ENCODE measurements at regions of chr6 and their contacts with region 1.

Region 1: DNA sequence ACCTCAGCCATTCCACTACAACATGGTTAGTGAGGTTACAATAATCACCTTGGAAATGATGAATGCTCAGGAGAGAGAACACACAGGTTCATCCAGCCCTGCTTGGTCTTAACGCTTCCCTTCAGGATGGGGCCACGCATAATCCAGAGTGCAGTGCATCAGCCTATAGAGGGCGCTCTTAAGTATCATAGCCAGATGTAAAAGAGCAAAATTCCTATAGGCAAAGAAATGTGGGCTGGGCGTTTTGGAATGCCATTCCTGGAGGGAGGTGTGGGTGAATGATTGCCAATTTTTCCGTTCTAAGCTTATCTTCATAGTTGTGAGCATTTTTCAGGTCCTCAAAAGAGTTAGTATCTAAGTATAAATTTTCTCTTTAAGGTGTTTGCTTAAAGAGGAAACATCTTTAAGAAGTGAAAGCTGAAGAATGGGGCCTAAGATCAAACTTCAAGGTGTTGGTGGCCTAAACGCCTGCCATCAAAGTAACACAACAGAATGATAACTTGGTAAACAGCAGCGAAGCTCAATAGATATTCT is 1.8 kb downstream of the RIPOR2 start:
- DNase-seq: peak; percentile 61
- ATAC-seq: no peak
- H3K4me3 Mint-ChIP-seq: peak overlapping the region; percentile 92
- H3K27ac Mint-ChIP-seq: peak overlapping the region; percentile 95
- H3K4me1 Mint-ChIP-seq: peaks cover 73% of the 10 kb centered on the region
- H3K27me3 Mint-ChIP-seq: no peaks in the 10 kb centered on the region
- CTCF ChIP-seq: peak; percentile 97

Region 2: DNA sequence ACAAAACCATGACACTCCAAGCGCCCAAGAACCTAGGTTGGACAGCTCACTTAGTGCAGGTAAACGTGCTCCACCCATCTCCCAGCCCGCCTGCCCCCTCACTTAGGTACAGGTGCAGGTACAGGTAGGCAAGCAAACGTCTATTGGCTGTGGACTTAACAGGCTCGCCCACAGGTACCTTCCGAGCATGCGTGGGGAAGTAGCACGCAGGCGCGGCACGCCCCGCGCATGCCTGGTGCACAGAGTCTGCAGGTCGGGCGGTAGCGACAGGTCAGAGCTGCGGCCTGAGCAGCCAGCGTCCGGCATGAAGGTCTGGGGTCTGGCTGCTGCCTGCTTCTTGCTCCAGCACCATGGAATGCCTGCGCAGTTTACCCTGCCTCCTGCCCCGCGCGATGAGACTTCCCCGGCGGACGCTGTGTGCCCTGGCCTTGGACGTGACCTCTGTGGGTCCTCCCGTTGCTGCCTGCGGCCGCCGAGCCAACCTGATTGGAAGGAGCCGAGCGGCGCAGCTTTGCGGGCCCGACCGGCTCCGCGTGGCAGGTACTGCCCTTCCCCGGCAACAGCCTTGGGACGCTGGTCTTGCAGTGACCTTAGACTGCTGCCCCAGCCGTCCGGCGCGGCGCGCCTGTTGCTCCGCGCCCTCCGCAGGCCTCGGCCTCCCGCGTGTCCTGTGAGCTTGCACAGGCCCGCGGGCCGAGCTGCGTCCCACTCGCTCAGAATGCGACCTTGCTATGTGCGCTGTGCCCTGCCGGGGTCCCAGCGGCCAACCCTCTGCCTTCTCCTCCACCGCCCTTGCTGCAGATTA is 531.0 kb before region 1 on chr6 and contains the start of gene MRS2:
- CTCF ChIA-PET with region 1: no interaction called
- POLR2A ChIA-PET with region 1: no interaction called
- intact Hi-C with region 1: no loop called
- DNase-seq: peak; percentile 81
- ATAC-seq: peak; percentile 93
- H3K4me3 Mint-ChIP-seq: peak within 1 kb of the TSS; percentile 97
- H3K27ac Mint-ChIP-seq: peak within 1 kb of the TSS; percentile 71
- H3K4me1 Mint-ChIP-seq: peaks cover 25% of the 10 kb centered on the region
- H3K27me3 Mint-ChIP-seq: peaks cover 15% of the 10 kb centered on the region
- CTCF ChIP-seq: no peak
- total RNA-seq, gene MRS2: 24.7 to 26.3 TPM

Region 3: DNA sequence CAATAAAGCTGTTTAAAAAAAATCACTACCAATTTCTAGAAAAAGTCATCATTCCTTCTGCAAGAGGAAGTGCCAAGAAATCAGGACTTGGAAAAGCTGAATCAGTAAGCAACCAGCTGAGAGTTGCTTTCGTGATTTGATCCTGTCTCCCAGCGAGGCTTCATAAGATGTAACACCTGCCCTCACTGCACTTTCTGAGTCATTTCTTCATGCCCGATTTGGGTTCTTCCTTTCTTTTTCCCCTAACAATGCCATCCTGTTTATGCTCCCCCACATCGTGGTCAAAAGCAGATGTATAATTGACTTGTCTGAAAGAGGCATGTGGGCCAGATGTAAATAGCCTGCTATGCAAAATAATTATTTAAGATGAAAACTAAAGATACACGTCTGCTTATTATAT is 50.3 kb before region 1 on chr6:
- CTCF ChIA-PET with region 1: interaction called, 53 read pairs
- POLR2A ChIA-PET with region 1: interaction called, 6 read pairs
- intact Hi-C with region 1: no loop called
- DNase-seq: peak; percentile 69
- ATAC-seq: peak; percentile 79
- H3K4me3 Mint-ChIP-seq: peak overlapping the region; percentile 49
- H3K27ac Mint-ChIP-seq: peak overlapping the region; percentile 97
- H3K4me1 Mint-ChIP-seq: peaks cover 84% of the 10 kb centered on the region
- H3K27me3 Mint-ChIP-seq: no peaks in the 10 kb centered on the region
- CTCF ChIP-seq: no peak

Region 4: DNA sequence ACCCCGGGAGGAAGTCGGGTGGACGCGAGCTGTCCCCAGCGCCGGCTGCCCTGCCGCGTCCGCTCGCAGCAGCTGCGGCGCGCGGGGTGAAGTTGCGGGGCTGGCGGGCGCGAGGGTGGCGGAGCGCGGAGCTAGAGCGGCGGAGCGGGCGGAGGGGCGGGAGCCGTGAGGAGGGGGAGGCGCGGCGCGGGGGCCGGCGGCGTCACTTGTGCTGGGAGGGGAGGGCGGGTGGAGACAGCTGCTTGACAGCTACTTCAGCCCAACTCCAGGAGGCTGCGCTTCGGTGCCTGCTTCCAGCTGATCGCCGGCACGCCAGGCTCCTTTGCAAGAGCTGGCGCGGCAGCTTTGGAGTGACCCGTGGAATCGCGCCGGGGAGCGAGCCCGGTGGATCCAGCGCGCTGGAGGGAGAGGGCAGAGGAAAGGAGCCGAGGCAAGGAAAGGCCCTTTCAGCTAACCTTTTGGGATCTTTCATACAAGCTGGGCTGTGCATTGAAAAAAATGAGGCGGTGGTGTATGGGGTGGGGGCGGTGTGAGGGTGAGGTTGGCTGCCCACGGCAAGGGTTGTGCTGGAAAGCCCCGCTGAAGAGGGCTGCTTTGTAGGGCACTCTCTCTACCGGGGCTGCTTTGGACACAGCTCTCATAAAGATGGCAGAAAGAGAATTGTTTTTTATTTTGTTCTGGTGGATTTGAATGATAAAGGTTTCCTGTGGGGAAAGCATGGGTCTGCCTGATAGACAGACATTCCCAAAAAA is 22.8 kb before region 1 on chr6:
- CTCF ChIA-PET with region 1: interaction called, 237 read pairs
- POLR2A ChIA-PET with region 1: interaction called, 191 read pairs
- intact Hi-C with region 1: no loop called
- DNase-seq: peak; percentile 64
- ATAC-seq: peak; percentile 18
- H3K4me3 Mint-ChIP-seq: peak overlapping the region; percentile 97
- H3K27ac Mint-ChIP-seq: peak overlapping the region; percentile 96
- H3K4me1 Mint-ChIP-seq: peaks cover 73% of the 10 kb centered on the region
- H3K27me3 Mint-ChIP-seq: no peaks in the 10 kb centered on the region
- CTCF ChIP-seq: no peak

Region 5: GRCh38 chr6:24968786-24969185 is 34.9 kb after region 1 on chr6:
- CTCF ChIA-PET with region 1: interaction called, 15 read pairs
- POLR2A ChIA-PET with region 1: interaction called, 12 read pairs
- intact Hi-C with region 1: loop called (anchors 5 kb)
- DNase-seq: peak; percentile 37
- ATAC-seq: peak; percentile 73
- H3K4me3 Mint-ChIP-seq: no peak overlapping the region
- H3K27ac Mint-ChIP-seq: no peak overlapping the region
- H3K4me1 Mint-ChIP-seq: peaks cover 49% of the 10 kb centered on the region
- H3K27me3 Mint-ChIP-seq: no peaks in the 10 kb centered on the region
- CTCF ChIP-seq: no peak

Region 6: GRCh38 chr6:25006565-25007001 is 72.6 kb after region 1 on chr6:
- CTCF ChIA-PET with region 1: interaction called, 68 read pairs
- POLR2A ChIA-PET with region 1: interaction called, 7 read pairs
- intact Hi-C with region 1: no loop called
- DNase-seq: peak; percentile 75
- ATAC-seq: peak; percentile 72
- H3K4me3 Mint-ChIP-seq: peak overlapping the region; percentile 52
- H3K27ac Mint-ChIP-seq: peak overlapping the region; percentile 94
- H3K4me1 Mint-ChIP-seq: peaks cover 82% of the 10 kb centered on the region
- H3K27me3 Mint-ChIP-seq: no peaks in the 10 kb centered on the region
- CTCF ChIP-seq: no peak

Region 7: DNA sequence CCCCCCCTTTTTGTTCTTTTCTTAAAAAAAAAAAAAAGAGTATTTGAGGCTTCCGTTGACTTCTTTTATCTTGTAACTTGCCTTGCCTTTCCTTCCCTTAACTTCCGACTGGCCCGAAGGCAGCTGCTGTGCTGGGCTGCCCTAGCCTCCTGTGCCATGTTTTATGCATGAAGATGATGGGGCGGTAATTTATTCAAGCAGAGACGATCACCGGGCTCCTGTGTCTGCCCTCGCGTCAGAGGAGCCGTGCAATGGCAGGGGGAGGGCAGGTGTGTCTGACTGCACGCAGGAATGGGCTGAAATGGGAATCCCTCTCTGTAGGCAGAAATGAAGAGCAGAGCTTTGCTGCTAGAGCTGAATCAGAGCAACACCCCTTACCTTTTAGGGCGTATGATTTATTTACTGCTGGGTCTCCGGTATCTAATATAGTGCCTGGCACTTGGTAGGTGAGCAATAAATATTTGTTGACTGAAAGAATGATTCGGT is 108.1 kb after region 1 on chr6:
- CTCF ChIA-PET with region 1: interaction called, 11 read pairs
- POLR2A ChIA-PET with region 1: interaction called, 3 read pairs
- intact Hi-C with region 1: no loop called
- DNase-seq: peak; percentile 64
- ATAC-seq: peak; percentile 64
- H3K4me3 Mint-ChIP-seq: peak overlapping the region; percentile 83
- H3K27ac Mint-ChIP-seq: peak overlapping the region; percentile 92
- H3K4me1 Mint-ChIP-seq: peaks cover 52% of the 10 kb centered on the region
- H3K27me3 Mint-ChIP-seq: no peaks in the 10 kb centered on the region
- CTCF ChIP-seq: no peak

Measured in activated CD8-positive, alpha-beta T cell treated with anti-CD3 and anti-CD28 coated beads for 36 hours (primary cell).